MCF 10A (cell line): ENCODE measurements at regions of chr15 and their contacts with region 1.

Region 1: DNA sequence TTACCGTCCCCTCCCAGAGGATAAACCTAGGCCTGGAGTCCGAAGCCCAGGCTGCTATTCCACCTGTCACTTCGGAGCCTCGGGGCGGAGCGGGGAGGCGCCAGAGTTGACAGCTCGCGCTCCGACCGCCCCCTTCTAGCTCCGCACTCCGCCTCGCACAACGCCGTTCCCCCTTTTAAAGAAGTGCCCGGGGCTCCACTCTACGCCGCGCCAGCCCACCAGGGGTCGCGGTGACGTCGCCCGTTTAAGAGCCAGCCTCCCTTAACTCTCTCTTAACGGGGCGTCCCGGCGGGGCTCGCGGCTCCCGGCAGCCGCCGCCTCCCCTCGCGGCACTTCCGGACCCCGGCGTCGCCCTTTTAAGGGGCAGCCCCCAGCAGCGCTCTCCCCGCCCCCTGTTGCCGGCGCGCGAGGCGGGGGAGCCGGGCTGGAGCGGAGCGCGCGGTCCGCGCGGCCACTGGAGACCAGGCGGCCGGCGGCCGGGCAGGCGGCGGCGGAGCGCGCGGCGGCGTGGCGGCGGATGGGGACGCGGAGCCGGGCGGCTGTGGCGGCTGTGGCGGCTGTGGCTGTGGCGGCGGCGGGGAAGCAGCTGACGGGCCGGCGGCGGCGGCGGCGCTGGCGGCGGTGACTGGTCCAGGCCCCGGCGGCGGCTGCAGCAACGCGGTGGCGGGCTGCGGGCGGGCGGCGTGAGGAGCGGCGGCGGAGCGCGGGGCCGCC is at the start of gene INAFM2:
- DNase-seq: peak; percentile 89
- H3K4me3 Mint-ChIP-seq: peak within 1 kb of the TSS; percentile 69
- H3K27ac Mint-ChIP-seq: no peak within 1 kb of the TSS
- H3K4me1 Mint-ChIP-seq: peaks cover 30% of the 10 kb centered on the region
- H3K27me3 Mint-ChIP-seq: no peaks in the 10 kb centered on the region
- CTCF ChIP-seq: peak; percentile 32
- total RNA-seq, gene INAFM2: 14.9 and 15.7 TPM in 2 replicates

Region 2: DNA sequence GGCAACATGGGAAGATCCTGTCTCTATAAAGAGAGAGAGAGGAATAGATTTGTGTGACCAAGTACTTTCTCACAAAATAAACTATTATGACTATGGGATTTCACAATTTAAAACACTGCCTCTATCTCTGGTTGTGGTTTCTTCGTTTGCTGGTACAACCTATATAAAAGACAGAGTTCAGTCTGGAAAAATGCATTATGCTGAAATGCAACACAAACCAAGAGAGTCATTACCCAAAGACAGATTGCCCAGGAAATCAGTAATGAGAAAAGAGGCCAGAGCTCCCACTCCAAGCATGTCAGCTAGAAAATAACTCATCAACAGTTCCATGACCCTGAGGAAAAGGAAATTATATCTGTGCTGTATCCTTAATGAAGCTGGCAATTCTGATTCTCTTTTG is 426.6 kb before region 1 on chr15:
- CTCF ChIA-PET with region 1: no interaction called
- POLR2A ChIA-PET with region 1: no interaction called
- intact Hi-C with region 1: no loop called
- DNase-seq: no peak
- H3K4me3 Mint-ChIP-seq: no peak overlapping the region
- H3K27ac Mint-ChIP-seq: no peak overlapping the region
- H3K4me1 Mint-ChIP-seq: no peaks in the 10 kb centered on the region
- H3K27me3 Mint-ChIP-seq: no peaks in the 10 kb centered on the region
- CTCF ChIP-seq: no peak

Region 3: DNA sequence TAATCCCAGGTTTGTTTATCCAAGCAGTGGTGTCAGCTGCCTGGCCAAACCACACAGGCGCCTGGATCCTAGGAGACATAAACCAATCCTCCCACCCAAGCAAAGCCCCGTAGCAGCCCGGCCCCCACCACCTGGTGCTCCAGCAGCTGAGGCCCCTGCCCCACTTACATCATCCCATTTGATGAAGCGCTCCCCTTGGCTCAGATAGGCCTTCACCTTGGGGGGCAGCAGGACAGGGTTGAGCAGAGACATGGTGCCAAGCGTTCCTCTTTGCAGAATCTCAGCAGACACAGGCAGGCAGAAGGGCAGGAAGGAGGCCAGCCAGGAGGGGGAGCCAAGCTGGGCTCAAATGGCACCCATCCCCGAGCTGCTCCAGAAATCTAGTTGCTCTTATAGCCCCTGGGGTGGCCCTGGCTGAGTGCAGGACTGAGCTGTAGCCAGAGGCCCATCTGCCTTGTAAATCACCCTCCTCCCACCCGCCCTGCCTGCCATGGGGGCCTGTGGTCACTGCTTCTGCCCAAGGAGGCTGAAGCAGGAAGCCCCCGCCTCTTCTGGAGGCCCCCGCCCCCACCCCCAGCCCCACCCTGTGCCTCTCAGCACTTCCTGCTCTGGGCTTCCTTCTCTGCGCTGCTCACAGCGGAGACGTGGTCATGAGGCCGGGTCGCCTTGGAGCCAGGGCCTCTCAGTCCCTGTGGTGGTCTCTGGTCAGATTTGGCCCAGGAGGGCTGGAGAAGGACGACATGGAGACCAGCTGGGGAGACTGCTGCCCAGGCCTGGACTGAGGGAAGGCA is 15.8 kb before region 1 on chr15 and contains the start of gene PLCB2:
- CTCF ChIA-PET with region 1: interaction called, 30 read pairs
- POLR2A ChIA-PET with region 1: interaction called, 9 read pairs
- intact Hi-C with region 1: no loop called
- DNase-seq: no peak
- H3K4me3 Mint-ChIP-seq: no peak within 1 kb of the TSS
- H3K27ac Mint-ChIP-seq: no peak within 1 kb of the TSS
- H3K4me1 Mint-ChIP-seq: no peaks in the 10 kb centered on the region
- H3K27me3 Mint-ChIP-seq: peaks cover 13% of the 10 kb centered on the region
- CTCF ChIP-seq: no peak
- total RNA-seq, gene PLCB2: 0.15 and 0.84 TPM in 2 replicates

Region 4: DNA sequence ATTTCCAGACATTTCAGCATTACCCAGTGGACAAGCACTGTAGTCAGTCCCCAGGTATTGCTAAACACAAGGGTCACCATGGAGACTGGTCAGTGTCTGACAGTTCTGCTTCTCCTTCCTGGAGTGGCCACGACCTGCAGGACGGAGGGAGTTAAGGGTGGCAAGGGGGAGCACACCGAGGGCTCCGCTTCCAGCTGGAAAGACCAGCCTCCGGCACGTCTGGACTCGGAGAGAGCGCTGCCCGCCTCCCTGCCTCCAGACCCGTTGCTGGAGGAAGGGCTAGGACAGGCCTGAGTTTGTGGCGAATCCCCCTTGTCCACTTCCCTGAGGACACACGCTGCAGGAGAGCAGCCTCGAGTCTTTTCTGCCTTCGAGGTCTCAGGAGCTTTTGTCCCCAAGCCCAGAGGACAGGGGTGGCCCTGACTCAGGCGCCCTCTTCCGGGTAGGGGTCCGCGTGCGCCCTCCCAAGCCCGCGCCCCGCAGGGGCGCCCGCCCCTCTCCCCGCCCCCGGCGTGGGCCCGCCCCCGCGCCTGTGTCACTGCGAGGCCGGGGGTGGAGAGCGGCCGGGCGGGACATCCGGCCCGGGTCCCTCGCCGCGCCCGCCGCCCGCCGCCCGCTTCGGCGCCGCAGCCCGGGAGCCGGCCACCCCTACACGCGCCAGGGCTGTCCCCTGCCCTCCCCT is 147.2 kb after region 1 on chr15 and contains the start of gene CHST14:
- CTCF ChIA-PET with region 1: no interaction called
- POLR2A ChIA-PET with region 1: no interaction called
- intact Hi-C with region 1: no loop called
- DNase-seq: peak; percentile 27
- H3K4me3 Mint-ChIP-seq: peak within 1 kb of the TSS; percentile 69
- H3K27ac Mint-ChIP-seq: peak within 1 kb of the TSS; percentile 47
- H3K4me1 Mint-ChIP-seq: no peaks in the 10 kb centered on the region
- H3K27me3 Mint-ChIP-seq: no peaks in the 10 kb centered on the region
- CTCF ChIP-seq: no peak
- total RNA-seq, gene CHST14: 5.8 and 7.3 TPM in 2 replicates

Region 5: DNA sequence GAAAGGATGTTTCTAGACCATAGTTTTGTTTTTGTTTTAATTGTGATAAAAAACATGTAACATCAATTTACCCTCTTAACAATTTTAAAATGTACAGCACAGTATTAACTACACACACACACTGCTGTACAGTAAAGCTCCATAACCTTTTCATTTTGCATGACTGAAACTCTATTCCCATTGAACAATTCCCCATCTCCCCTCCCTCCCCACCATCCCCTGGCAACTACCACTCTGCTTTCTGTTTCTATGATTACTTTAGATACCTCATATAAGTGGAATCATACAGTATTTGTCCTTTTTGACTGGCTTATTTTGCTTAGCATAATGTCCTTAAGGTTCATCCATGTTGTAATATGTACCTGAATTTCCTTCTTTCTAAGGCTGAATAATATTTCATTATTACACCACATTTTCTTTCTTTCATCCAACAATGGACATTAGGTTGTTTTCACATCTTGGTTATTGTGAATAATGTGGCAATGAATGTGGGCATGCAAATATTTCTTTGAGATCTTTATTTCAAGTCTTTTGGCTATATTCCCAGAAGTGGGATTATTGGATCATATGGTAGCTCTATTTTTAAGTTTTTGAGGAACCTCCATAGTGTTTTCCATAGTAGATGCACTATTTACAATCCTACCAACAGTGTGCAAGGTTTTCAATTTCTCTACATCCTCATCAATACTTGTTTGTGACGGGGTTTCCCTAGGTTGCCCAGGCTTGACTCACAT is 158.1 kb after region 1 on chr15:
- CTCF ChIA-PET with region 1: no interaction called
- POLR2A ChIA-PET with region 1: no interaction called
- intact Hi-C with region 1: no loop called
- DNase-seq: peak; percentile 26
- H3K4me3 Mint-ChIP-seq: no peak overlapping the region
- H3K27ac Mint-ChIP-seq: no peak overlapping the region
- H3K4me1 Mint-ChIP-seq: peaks cover 7% of the 10 kb centered on the region
- H3K27me3 Mint-ChIP-seq: no peaks in the 10 kb centered on the region
- CTCF ChIP-seq: no peak